ENCODE measurements at regions of chr2 and their contacts with region 1.

Region 1: DNA sequence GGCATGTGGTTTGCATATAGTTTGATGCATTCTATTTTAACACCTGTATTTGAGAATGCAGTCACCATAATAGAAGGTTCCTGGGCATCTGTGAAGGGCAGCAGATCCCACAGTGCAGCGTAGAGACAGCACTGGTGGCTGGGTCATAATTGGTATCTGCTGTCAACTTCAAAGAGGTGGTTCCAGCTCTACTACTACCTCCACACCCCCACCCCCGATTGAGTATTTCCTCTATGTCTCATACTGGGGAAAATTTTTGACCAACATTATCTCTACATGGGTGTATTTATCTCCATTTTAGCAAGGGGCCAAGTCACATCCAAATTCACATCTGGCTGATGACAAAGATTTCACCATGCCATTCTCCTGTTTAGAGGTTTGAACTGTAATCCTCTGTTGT is 43.0 kb downstream of the TRPM8 start:
- DNase-seq: no peak
- ATAC-seq: no peak
- H3K4me3 ChIP-seq: no peak overlapping the region
- H3K27ac ChIP-seq: no peak overlapping the region
- H3K4me1 ChIP-seq: no peaks in the 10 kb centered on the region
- H3K27me3 ChIP-seq: no peaks in the 10 kb centered on the region
- CTCF ChIP-seq: no peak

Region 2: DNA sequence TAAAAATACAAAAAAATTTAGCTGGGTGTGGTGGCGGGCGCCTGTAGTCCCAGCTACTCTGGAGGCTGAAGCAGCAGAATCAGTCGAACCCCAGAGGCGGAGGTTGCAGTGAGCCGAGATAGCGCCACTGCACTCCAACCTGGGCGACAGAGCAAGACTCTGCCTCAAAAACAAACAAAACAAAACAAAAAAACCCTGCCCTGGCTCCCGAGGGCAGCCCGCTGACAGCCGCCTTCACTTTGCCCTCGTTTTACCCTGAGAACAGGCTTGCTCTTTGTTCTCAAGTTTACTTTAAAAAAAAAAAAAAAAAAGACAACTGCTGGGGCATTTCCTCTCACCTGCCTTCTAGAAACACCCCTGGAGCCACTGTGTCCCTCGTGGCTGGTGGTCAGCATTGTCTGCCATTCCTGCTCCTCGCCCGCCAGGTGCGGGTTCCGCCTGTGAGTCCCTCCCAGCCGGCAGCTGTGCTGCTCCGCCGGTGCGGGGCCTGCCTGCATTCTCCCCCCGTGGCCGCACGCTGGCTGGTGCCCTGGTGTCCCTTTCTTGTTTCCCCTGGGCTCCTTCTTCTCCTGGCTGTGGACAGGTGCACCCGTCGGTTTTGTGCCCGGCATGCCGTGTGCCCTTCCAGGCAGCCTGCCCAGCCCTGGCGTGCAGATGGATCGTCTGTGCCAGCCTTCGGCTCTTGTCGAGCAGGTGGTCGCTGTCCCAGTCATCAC is 499.3 kb before region 1 on chr2:
- CTCF ChIA-PET with region 1: no interaction called
- POLR2A ChIA-PET with region 1: no interaction called
- in situ Hi-C with region 1: no loop called
- intact Hi-C with region 1: no loop called
- DNase-seq: no peak
- ATAC-seq: no peak
- H3K4me3 ChIP-seq: no peak overlapping the region
- H3K27ac ChIP-seq: no peak overlapping the region
- H3K4me1 ChIP-seq: no peaks in the 10 kb centered on the region
- H3K27me3 ChIP-seq: no peaks in the 10 kb centered on the region
- CTCF ChIP-seq: no peak

Region 3: DNA sequence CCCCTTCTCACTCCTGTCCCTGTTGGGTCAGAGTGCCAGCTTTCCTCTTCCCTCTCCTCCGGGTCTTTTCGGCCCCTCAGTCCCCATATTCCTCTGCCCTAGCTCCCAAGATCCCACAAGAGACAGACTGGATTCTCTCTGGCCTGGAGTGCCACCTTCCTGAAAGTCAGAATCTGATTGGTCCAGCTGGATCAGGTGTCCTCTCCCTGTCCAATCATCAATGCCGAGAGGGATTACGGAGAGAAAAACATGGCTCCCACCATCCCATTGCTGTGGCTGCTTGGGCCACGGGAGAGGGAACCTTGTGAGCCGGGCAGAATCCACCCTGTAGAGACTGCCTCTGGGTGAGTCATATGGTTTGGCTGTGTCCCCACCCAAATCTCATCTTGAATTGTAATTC is 184.8 kb before region 1 on chr2:
- CTCF ChIA-PET with region 1: no interaction called
- POLR2A ChIA-PET with region 1: no interaction called
- in situ Hi-C with region 1: no loop called
- intact Hi-C with region 1: no loop called
- DNase-seq: no peak
- ATAC-seq: no peak
- H3K4me3 ChIP-seq: no peak overlapping the region
- H3K27ac ChIP-seq: no peak overlapping the region
- H3K4me1 ChIP-seq: no peaks in the 10 kb centered on the region
- H3K27me3 ChIP-seq: no peaks in the 10 kb centered on the region
- CTCF ChIP-seq: no peak

Region 4: GRCh38 chr2:234003972-234004617 is 43.9 kb after region 1 on chr2:
- CTCF ChIA-PET with region 1: no interaction called
- POLR2A ChIA-PET with region 1: no interaction called
- in situ Hi-C with region 1: no loop called
- intact Hi-C with region 1: no loop called
- DNase-seq: peak; percentile 55
- ATAC-seq: peak; percentile 99
- H3K4me3 ChIP-seq: peak overlapping the region in 1 of 2 experiments; percentile 24; a peak in 2 of 4 replicates
- H3K27ac ChIP-seq: peak overlapping the region; percentile 87
- H3K4me1 ChIP-seq: peaks cover 26% of the 10 kb centered on the region
- H3K27me3 ChIP-seq: no peaks in the 10 kb centered on the region
- CTCF ChIP-seq: no peak

Region 5: DNA sequence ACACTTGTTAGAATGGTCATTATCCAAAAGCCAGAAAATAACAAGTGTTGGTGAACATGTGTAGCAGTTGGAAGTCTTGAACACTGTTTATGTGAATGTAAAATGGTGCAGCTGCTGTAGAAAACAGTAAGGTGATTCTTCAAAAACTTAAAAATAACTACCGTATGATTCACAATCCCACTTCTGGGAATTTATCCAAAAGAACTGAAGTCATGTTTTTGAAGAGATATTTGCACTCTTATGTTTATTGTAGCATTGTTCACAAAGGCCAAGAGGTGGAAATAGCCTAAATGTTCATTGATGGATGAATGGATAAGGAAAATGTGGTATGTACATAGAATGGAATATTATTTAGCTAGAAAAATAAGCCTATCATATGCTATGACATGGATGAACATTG is 84.0 kb after region 1 on chr2:
- CTCF ChIA-PET with region 1: no interaction called
- POLR2A ChIA-PET with region 1: no interaction called
- in situ Hi-C with region 1: no loop called
- intact Hi-C with region 1: no loop called
- DNase-seq: peak; percentile 64
- ATAC-seq: peak; percentile 77
- H3K4me3 ChIP-seq: no peak overlapping the region
- H3K27ac ChIP-seq: no peak overlapping the region
- H3K4me1 ChIP-seq: no peaks in the 10 kb centered on the region
- H3K27me3 ChIP-seq: no peaks in the 10 kb centered on the region
- CTCF ChIP-seq: no peak

Region 6: DNA sequence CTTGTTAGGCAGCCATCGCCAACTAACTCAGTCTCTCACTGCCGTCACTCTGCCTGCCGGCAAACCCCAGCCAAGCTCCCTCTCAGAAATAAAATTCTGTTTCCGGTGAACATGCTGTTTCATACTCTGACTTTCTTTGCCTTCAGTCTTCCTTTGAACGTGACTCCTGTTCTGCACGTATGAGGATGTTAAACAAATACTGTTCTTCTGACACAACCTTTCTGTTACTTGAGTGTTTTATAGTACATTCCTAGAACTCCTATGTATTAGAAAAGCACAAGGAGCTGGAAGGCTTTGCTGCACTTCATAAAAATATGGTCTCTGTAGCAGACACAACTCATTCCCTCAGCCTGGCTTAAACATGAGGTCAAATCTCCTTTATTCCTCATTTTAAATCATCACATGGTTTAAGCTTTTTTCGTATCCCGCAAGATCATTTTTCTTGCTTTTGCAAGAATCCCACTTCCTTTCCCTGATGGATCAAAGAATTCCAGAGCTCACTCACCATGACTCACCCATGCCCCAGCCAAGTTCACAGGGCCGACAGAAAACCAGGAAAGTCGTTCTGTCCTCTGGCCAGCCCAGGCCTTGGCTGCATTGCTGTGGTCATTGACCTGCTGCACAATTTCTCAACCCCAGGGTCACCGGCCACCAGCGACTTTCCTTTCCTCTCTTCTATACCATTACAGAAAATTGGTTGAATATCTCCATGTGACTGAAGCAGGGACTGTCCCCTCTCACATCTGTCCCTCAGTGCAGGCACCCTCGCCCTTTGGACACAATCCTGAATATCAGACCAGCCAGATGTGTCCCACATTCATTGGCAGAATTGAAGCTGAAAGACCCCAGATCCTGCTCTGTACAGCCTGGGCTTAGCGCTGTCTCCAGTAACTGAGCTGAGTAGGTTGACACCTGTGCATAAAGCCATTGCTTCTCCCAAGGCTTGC is 719.8 kb after region 1 on chr2:
- CTCF ChIA-PET with region 1: interaction called, 13 read pairs
- POLR2A ChIA-PET with region 1: no interaction called
- in situ Hi-C with region 1: no loop called
- intact Hi-C with region 1: no loop called
- DNase-seq: peak; percentile 71
- ATAC-seq: peak; percentile 93
- H3K4me3 ChIP-seq: no peak overlapping the region
- H3K27ac ChIP-seq: peak overlapping the region; percentile 62
- H3K4me1 ChIP-seq: peaks cover 16% of the 10 kb centered on the region
- H3K27me3 ChIP-seq: no peaks in the 10 kb centered on the region
- CTCF ChIP-seq: no peak

Measured in Panc1 (cell line).